HepG2 (cell line): ENCODE measurements at regions of chr1 and their contacts with region 1.

Region 1: GRCh38 chr1:201481761-201482493 is 12.9 kb upstream of the PHLDA3 start:
- DNase-seq: peak; percentile 73
- ATAC-seq: peak; percentile 95
- H3K4me3 ChIP-seq: peak overlapping the region in 2 of 3 experiments; percentile 27 to 57; a peak in 2 of 6 replicates
- H3K27ac ChIP-seq: no peak overlapping the region
- H3K4me1 ChIP-seq: peaks cover 29% of the 10 kb centered on the region
- H3K27me3 ChIP-seq: peaks cover 1 to 30% of the 10 kb centered on the region in 2 experiments; a peak in 3 of 5 replicates
- CTCF ChIP-seq: peak; percentile 97
- EP300 ChIP-seq: no peak
- POLR2A ChIP-seq: no peak
- RAD21 ChIP-seq: peak; percentile 99

Region 2: DNA sequence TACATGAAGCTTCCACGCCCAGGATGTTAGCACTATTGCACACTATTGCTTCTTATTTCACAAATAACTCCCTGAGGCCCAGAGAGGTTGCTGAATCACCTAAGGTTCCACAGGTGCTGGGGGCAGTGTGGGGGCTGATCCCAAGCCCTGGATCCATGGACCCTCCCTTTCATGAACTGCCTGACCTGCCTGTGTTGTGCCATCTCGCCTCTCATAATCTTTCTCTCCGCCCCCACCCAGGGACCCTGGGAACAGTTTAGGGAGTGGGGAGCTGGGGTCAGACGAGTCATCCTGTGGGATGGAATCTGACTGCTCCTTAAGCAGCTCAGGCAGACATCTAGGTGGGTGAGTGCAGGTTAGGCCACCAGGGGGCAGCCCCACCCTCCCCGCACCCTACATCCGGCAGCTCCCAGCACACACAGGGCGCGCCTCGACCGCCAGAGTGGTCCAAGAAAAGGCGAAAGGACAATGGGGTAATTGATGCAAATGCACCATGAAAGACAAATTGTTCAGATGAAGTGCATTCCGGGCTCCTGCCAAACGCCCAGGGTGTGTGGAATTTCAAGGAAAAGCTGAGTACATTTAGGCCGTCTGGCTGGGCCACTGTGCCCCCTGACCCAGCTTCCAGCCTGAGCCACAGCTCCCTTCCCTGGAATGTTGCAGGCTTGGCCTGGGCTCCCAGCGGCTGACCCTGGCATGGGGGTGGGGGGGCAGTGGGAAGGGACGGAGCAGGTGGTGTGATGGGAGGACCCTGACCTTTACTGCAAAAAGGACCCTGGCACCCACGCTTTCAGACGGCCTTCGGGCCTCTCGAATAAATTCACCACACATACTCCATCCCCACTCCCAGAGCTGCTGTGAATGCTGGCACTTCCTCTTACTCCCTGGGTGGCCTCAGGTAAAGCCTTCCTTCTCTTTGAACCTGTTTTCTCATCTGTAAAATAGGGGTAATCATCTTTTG is 33.7 kb before region 1 on chr1:
- CTCF ChIA-PET with region 1: interaction called, 21 read pairs
- POLR2A ChIA-PET with region 1: interaction called, 7 read pairs
- in situ Hi-C with region 1: no loop called
- intact Hi-C with region 1: loop called (anchors 1 kb)
- DNase-seq: peak; percentile 56
- ATAC-seq: peak; percentile 98
- H3K4me3 ChIP-seq: peak overlapping the region in 1 of 3 experiments; percentile 52; a peak in 1 of 6 replicates
- H3K27ac ChIP-seq: no peak overlapping the region
- H3K4me1 ChIP-seq: peaks cover 25% of the 10 kb centered on the region
- H3K27me3 ChIP-seq: peaks cover 4 to 17% of the 10 kb centered on the region in 2 experiments; a peak in 4 of 5 replicates
- CTCF ChIP-seq: peak; percentile 89
- EP300 ChIP-seq: no peak
- POLR2A ChIP-seq: no peak
- RAD21 ChIP-seq: peak; percentile 70

Region 3: GRCh38 chr1:201501812-201502506 is 20.0 kb after region 1 on chr1:
- CTCF ChIA-PET with region 1: interaction called, 5 read pairs
- POLR2A ChIA-PET with region 1: interaction called, 11 read pairs
- in situ Hi-C with region 1: no loop called
- intact Hi-C with region 1: no loop called
- DNase-seq: no peak
- ATAC-seq: 0 out of 3 replicates have a peak, but pooled peaks have one; percentile 3
- H3K4me3 ChIP-seq: no peak overlapping the region
- H3K27ac ChIP-seq: peak overlapping the region; percentile 43
- H3K4me1 ChIP-seq: peaks cover 82% of the 10 kb centered on the region
- H3K27me3 ChIP-seq: no peaks in the 10 kb centered on the region; a peak in 1 of 5 replicates
- CTCF ChIP-seq: no peak
- EP300 ChIP-seq: no peak
- POLR2A ChIP-seq: no peak
- RAD21 ChIP-seq: no peak